Naive thymus-derived CD4-positive, alpha-beta T cell (primary cell): ENCODE measurements at regions of chr22 and their contacts with region 1.

Region 1: DNA sequence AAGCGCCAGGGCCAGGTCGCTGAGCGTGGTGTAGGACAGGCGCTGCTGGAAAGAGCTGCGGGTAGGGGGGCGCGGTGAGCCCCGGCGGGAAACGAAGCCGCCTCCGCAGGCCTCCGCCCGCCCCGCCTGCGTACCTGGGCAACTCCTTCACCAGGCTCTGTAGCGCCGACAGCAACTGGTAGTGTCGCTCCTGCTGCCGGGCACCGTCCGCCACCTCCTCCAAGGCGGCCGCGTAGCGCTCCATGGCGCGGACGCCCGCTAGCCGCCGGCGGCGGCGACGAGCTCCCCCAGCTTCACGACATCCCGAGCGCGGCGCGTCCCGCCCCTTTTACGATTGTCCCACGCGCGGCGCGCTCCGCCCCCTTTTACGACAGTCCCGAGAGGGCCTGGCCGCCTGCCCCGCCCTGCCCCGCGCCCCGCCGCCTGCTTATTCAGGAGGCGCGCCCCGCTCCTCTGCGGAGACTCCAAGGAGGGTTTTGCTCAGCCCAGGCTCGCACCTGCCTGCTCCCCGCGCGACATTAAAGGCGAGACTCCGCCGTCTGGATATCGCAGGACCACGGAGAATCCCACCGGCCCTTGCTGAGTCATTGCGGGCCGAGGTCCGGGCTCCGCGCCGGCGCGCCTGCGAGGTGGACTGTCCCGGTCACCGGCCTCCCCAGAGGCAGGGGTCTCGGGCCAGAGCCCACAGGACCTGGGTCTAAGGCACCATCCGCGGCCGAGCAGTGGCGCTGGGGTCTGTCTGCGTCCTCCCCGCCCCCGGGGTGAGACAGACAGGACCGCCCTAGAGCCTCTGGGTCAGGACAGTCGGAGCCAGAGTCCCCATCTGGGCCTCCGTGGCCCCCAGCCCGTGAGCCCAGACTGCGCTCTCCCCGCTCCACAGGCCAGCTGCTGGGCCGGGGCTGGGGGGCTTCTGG is at the start of gene DGCR6L:
- DNase-seq: peak; percentile 92 to 98 (median 95)
- ATAC-seq: peak; percentile 96
- H3K4me3 ChIP-seq: peak within 1 kb of the TSS; percentile 91
- H3K4me3 Mint-ChIP-seq: peak within 1 kb of the TSS; percentile 83 to 98 (median 92)
- H3K27ac ChIP-seq: peak within 1 kb of the TSS; percentile 89
- H3K27ac Mint-ChIP-seq: peak within 1 kb of the TSS; percentile 76 to 95 (median 89)
- H3K4me1 ChIP-seq: peaks cover 20 to 53% of the 10 kb centered on the region in 2 donors
- H3K4me1 Mint-ChIP-seq: peaks cover 28 to 70% (median 58%) of the 10 kb centered on the region in 7 donors
- H3K27me3 ChIP-seq: no peaks in the 10 kb centered on the region
- H3K27me3 Mint-ChIP-seq: no peaks in the 10 kb centered on the region
- total RNA-seq, gene DGCR6L: 29.4 to 55.3 (median 43.7) TPM

Region 2: DNA sequence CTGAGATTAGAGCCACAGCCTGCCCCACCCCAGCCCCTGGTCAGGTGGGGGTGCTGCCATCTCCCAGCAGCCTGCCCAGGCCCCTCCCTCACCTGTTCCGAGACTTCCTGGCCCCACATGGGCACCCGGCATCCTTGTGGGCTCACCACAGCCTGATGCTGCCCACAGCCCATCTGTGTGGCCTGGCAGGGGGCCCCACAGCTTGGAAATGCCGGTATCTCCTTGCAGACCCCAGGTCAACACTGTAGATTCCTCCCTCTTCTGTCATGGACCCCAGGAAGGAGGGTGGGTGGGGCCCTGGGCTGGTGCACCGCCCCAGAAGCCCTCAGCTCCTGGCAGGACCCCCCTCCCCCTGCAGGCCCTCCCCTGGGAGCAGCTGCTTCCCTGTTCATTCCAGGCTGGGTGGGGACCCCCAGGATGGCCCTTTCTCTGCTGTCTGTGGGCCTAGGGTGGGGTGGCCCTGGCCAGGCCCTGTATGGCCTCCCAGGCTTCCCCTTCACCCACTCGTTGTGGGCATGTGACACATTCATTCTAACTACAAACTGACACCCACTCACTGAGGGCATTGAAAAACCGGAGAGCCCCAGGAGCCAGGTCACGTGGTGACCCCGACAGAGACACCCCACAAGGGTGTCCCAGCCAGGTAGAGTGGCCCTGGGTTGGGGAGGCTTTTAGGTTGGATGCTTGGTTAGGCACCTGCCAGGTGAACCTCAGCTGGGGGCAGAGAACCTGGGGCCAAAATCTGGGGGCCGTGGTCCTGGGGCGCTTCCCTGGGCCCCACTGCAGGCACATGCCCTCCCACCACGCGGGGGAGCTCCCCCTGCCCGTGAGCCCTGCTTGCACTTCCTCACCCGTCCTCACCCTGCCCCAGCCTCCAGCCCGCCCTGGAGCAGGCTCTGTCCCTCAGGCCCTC is 125.1 kb before region 1 on chr22:
- CTCF ChIA-PET with region 1: no interaction called
- POLR2A ChIA-PET with region 1: no interaction called
- intact Hi-C with region 1: no loop called
- DNase-seq: no peak
- ATAC-seq: no peak
- H3K4me3 ChIP-seq: no peak overlapping the region
- H3K4me3 Mint-ChIP-seq: no peak overlapping the region
- H3K27ac ChIP-seq: no peak overlapping the region
- H3K27ac Mint-ChIP-seq: no peak overlapping the region
- H3K4me1 ChIP-seq: no peaks in the 10 kb centered on the region
- H3K4me1 Mint-ChIP-seq: peaks cover 0 to 1% (median 0%) of the 10 kb centered on the region in 7 donors
- H3K27me3 ChIP-seq: no peaks in the 10 kb centered on the region
- H3K27me3 Mint-ChIP-seq: no peaks in the 10 kb centered on the region

Region 3: GRCh38 chr22:20243537-20244249 is 76.3 kb before region 1 on chr22:
- CTCF ChIA-PET with region 1: no interaction called
- POLR2A ChIA-PET with region 1: interaction called, 5 read pairs
- intact Hi-C with region 1: loop called in 1 of 2 experiments (anchors 2 kb)
- DNase-seq: peak in 8 of 9 donors; percentile 44 to 67 (median 56)
- ATAC-seq: peak; percentile 64
- H3K4me3 ChIP-seq: peak overlapping the region; percentile 51
- H3K4me3 Mint-ChIP-seq: peak overlapping the region; percentile 71 to 88 (median 77)
- H3K27ac ChIP-seq: peak overlapping the region; percentile 78
- H3K27ac Mint-ChIP-seq: peak overlapping the region; percentile 88 to 98 (median 94)
- H3K4me1 ChIP-seq: peaks cover 50 to 74% of the 10 kb centered on the region in 2 donors
- H3K4me1 Mint-ChIP-seq: peaks cover 29 to 57% (median 35%) of the 10 kb centered on the region in 7 donors
- H3K27me3 ChIP-seq: no peaks in the 10 kb centered on the region
- H3K27me3 Mint-ChIP-seq: no peaks in the 10 kb centered on the region

Region 4: DNA sequence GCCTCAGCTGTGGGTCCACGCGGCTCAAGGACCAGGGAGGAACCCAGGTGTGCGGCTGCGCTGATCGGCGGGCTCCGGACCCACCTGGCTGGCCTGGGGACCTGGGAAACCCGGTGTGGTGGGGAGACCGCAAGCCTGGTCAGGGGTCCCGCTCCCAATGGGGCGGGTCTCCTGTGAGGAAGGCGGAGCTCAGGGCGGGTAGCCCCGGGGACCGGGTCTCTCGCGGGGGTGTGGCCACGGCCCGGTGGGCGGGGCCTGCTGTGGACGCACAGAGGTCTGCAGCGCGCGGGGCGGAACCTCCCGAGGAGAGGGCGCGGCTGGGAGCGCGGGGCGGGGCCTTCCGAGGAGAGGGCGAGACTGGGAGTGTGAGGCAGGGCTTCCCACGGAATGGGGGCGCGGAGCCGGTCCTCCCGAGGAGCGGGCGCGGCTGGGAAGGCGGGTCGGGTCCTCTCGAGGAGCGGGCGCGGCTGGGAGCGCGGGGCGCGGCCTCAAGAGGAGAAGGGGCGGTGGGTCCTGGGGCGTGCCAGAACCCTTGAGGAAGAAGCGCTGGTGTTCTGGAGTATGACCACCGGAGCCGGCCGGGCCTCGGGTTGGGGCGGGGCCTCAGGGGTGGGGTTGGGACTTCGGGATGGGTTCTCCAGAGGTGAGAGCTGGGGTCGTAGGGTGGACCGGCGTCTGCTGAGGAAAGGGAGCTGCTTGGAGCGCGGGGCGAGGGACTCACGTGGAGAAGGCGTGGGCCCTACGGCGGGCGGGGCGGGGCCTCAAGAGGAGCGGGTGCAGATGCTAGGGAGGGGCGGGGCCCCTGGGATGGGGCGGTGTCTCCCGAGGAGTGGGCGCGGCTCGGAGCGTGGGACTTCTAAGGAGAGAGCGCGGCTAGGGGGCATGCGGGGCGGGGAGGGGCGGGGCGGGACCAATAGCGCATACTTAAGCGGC is 20.9 kb before region 1 on chr22:
- CTCF ChIA-PET with region 1: no interaction called
- POLR2A ChIA-PET with region 1: interaction called, 5 read pairs
- intact Hi-C with region 1: loop called (anchors 1 kb)
- DNase-seq: peak; percentile 80 to 93 (median 92)
- ATAC-seq: peak; percentile 96
- H3K4me3 ChIP-seq: peak overlapping the region; percentile 52
- H3K4me3 Mint-ChIP-seq: peak overlapping the region; percentile 72 to 89 (median 82)
- H3K27ac ChIP-seq: peak overlapping the region; percentile 60
- H3K27ac Mint-ChIP-seq: peak overlapping the region in 6 of 9 donors; percentile 36 to 79 (median 62)
- H3K4me1 ChIP-seq: peaks cover 0 to 3% of the 10 kb centered on the region in 2 donors
- H3K4me1 Mint-ChIP-seq: peaks cover 4 to 11% (median 9%) of the 10 kb centered on the region in 7 donors
- H3K27me3 ChIP-seq: no peaks in the 10 kb centered on the region
- H3K27me3 Mint-ChIP-seq: peaks cover 0 to 27% (median 4%) of the 10 kb centered on the region in 5 donors